Activated naive CD4-positive, alpha-beta T cell treated with anti-CD3 and anti-CD28 coated beads for 36 hours (primary cell): ENCODE measurements at regions of chr5 and their contacts with region 1.

Region 1: DNA sequence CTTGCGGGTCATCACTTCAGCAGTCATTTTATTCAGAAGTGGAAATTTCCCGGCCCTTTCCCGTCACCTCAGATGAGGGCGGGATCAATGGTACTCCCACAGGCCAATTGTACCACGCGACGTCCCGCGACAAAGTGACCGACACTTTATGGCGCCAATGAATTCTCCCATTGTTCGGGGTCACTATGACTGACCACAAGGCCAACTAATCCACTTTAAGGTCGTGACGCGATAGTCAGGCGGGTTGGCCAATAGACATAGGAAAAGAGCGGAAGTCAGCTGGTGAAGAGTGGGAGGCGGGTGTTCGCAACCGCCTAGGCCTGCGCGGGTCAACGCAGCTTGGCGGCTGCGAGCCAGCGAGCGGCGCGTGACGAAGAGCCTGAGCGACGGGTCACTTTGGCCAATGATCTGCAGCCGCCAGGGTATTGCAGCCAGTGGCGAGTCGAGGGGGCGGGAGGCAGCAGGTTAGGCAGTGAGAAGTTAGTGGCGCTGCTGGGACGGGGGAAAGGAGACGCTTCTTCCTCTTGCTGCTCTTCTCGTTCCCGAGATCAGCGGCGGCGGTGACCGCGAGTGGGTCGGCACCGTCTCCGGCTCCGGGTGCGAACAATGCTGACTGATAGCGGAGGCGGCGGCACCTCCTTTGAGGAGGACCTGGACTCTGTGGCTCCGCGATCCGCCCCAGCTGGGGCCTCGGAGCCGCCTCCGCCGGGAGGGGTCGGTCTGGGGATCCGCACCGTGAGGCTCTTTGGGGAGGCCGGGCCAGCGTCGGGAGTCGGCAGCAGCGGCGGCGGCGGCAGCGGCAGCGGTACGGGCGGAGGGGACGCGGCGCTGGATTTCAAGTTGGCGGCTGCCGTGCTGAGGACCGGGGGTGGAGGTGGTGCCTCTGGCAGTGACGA is at the start of gene ANKHD1:
- DNase-seq: peak; percentile 99
- H3K4me3 Mint-ChIP-seq: no peak within 1 kb of the TSS
- H3K27ac Mint-ChIP-seq: no peak within 1 kb of the TSS
- H3K4me1 Mint-ChIP-seq: peaks cover 37% of the 10 kb centered on the region
- H3K27me3 Mint-ChIP-seq: no peaks in the 10 kb centered on the region
- total RNA-seq, gene ANKHD1: 83.2 to 87.0 TPM

Region 2: GRCh38 chr5:140174465-140175366 is 226.9 kb before region 1 on chr5 and contains the start of gene CYSTM1:
- CTCF ChIA-PET with region 1: interaction called, 3 read pairs
- intact Hi-C with region 1: loop called (anchors 1 kb)
- DNase-seq: peak; percentile 97
- H3K4me3 Mint-ChIP-seq: peak within 1 kb of the TSS; percentile 92
- H3K27ac Mint-ChIP-seq: peak within 1 kb of the TSS; percentile 66
- H3K4me1 Mint-ChIP-seq: peaks cover 12% of the 10 kb centered on the region
- H3K27me3 Mint-ChIP-seq: peaks cover 2% of the 10 kb centered on the region
- total RNA-seq, gene CYSTM1: 22.3 to 25.1 TPM

Region 3: DNA sequence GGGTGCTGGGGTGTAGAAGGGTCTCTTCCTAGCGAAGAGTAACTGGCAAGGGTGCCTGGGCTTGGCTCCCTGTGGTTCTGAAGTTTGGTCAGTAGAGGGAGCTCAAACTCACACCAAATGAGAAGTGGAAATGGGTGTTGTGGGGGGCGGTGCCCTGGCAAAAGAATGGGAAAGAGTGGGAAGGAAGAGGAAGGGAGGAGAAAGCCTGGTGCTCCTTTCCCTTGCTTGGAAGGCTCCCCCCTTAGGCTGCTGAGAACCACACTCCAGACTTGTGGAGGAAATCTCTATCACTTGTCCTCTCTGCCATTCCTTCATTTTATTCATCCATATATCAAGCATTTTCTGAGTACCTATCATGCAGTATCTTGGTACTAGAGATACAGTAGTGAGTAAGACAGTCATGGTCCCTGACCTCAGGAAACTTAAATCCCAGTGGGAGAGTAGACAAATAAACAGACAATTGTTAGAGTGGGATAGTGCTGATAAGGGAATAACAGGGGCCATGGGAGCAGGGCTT is 28.6 kb before region 1 on chr5:
- CTCF ChIA-PET with region 1: interaction called, 18 read pairs
- intact Hi-C with region 1: no loop called
- DNase-seq: peak; percentile 58
- H3K4me3 Mint-ChIP-seq: no peak overlapping the region
- H3K27ac Mint-ChIP-seq: no peak overlapping the region
- H3K4me1 Mint-ChIP-seq: peaks cover 2% of the 10 kb centered on the region
- H3K27me3 Mint-ChIP-seq: no peaks in the 10 kb centered on the region

Region 4: DNA sequence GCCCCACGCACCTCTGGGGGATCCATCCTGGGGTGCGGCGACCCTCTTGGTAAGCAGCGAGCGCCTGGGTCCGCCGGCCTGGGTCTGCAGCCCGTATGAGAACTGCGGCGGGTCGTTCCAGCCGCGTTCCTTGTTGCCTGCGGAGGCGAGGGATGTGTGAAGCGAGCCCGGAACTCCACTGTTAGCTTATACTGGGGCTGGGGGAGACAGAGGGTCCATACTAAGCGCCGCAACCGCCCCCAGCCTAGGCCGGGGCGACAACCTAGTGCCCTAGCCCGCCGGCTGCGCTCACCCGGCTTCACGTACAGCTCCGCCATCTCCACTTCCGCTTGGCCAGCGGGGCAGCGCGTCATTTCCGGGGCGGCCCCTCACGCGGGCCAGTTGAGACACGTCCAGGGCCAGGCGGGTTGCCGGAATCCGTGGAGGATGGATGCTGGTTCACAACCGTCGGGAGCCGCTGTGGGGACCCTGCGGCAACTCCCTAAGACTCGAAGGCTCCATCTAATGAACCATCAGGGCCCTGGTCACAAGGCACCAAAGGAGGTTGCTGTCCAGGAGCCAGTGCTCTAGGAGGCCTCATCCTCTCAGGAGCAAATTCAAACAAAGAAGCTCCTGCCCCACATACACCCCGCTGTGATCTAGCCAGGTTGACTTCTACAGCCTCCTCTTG is 155.7 kb after region 1 on chr5 and contains the start of gene SRA1:
- CTCF ChIA-PET with region 1: no interaction called
- intact Hi-C with region 1: loop called (anchors 1 kb)
- DNase-seq: peak; percentile 92
- H3K4me3 Mint-ChIP-seq: peak within 1 kb of the TSS; percentile 79
- H3K27ac Mint-ChIP-seq: peak within 1 kb of the TSS; percentile 93
- H3K4me1 Mint-ChIP-seq: peaks cover 46% of the 10 kb centered on the region
- H3K27me3 Mint-ChIP-seq: no peaks in the 10 kb centered on the region
- total RNA-seq, gene SRA1: 38.0 to 39.6 TPM

Region 5: DNA sequence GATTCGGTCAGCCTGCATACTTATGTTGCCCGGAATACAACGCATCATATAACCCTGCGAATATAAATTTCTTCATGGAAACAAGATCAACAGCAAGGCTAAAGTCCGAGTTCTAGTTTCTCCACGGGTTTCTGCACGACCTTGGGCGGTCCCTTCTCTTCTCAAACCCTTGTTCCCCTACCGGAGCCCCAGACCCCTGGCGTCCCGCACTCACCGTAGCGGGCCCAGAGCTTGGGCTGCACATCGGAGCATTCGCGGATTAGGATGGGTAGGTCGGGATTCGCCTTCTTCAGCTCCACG is 245.4 kb after region 1 on chr5:
- CTCF ChIA-PET with region 1: interaction called, 4 read pairs
- intact Hi-C with region 1: loop called (anchors 1 kb)
- DNase-seq: no peak
- H3K4me3 Mint-ChIP-seq: peak overlapping the region; percentile 100
- H3K27ac Mint-ChIP-seq: peak overlapping the region; percentile 99
- H3K4me1 Mint-ChIP-seq: peaks cover 40% of the 10 kb centered on the region
- H3K27me3 Mint-ChIP-seq: no peaks in the 10 kb centered on the region

Region 6: DNA sequence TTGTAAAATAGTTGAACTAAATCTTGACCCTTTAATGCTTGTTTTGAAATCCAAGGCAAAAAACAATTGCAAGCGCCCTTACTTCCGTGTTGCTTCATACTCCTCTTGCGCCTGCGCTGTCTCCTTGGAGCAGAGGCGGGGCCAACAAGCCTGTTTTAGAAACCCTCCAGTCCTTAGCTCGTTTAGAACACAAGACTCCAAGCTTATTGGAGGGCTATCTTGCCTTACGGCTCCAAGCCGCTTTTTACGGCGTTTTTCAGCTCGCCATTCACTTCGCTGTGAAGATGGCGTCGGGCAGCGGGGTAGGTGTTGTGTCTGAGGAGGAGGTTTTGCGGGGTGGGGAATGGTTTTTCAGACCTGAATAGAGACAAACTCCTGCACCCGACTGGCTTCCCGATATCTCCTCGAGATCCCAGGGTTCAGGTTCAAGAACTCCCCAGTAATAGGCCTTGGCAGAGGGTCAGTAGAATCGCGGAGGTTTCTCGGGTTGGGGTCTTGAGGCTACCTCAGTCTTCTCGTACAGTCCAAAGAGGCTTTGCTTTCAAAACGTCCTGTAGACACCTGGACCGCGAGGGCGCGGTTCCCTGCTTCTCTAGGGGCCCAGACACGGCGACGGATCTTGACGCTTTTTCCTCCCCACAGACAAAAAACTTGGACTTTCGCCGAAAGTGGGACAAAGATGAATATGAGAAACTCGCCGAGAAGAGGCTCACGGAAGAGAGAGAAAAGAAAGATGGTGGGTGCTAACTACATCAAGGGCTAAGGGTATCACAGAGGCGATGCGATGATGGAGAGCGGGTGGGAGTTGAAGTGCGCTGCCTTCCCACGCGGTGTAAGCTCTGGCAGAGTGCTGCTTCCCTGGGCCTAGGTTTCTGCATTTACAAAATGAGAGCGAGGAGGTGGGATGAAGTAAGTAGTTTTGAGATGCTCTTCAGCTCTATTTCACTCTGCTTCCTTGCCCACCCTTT is 298.9 kb after region 1 on chr5 and contains the start of gene ZMAT2:
- CTCF ChIA-PET with region 1: no interaction called
- intact Hi-C with region 1: loop called (anchors 1 kb)
- DNase-seq: peak; percentile 97
- H3K4me3 Mint-ChIP-seq: peak within 1 kb of the TSS; percentile 97
- H3K27ac Mint-ChIP-seq: peak within 1 kb of the TSS; percentile 87
- H3K4me1 Mint-ChIP-seq: peaks cover 24% of the 10 kb centered on the region
- H3K27me3 Mint-ChIP-seq: no peaks in the 10 kb centered on the region
- total RNA-seq, gene ZMAT2: 52.9 to 58.8 TPM

Region 7: DNA sequence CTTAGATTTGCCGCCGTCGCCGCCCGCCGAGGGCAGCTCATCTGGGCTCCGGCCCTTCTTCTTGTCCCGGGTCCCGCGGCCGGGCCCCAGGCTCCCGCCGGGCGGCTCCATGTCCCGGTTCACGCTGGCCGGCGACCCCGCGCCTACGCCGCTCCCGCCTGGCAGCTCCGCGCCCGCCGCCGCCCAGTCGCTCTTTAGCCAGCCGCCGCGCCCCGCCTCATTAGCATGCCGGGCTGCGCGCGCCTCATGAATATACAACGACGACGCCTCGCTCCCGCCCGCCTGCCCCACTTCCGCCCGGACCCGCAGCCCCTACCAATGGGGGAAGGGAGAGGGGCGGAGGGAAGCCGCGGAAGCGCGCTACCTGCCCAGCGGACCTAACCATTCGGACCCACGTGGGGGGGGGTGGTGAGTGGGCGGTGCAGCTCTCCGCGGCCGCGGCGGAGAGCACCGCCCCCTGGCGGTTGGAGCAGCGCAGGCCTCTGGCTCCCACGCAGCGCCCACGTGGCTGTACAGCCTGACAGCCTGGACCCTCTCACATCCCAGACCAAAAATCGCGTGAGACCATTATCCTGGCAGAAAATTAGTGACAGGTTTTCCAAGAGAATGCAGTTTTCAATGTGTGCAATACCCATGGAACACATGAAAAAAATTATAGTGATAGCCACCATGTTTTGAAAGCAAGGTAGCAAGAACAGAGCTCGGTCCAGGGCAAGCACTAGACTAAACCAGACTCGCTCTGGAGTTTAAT is 1217.4 kb after region 1 on chr5 and contains the start of gene DIAPH1:
- CTCF ChIA-PET with region 1: no interaction called
- intact Hi-C with region 1: loop called (anchors 5 kb)
- DNase-seq: peak; percentile 99
- H3K4me3 Mint-ChIP-seq: peak within 1 kb of the TSS; percentile 98
- H3K27ac Mint-ChIP-seq: peak within 1 kb of the TSS; percentile 99
- H3K4me1 Mint-ChIP-seq: peaks cover 60% of the 10 kb centered on the region
- H3K27me3 Mint-ChIP-seq: no peaks in the 10 kb centered on the region
- total RNA-seq, gene DIAPH1: 165 to 169 TPM